Posterior vena cava (tissue), 2 donors: ENCODE measurements at regions of chr7 and their contacts with region 1.

Region 1: DNA sequence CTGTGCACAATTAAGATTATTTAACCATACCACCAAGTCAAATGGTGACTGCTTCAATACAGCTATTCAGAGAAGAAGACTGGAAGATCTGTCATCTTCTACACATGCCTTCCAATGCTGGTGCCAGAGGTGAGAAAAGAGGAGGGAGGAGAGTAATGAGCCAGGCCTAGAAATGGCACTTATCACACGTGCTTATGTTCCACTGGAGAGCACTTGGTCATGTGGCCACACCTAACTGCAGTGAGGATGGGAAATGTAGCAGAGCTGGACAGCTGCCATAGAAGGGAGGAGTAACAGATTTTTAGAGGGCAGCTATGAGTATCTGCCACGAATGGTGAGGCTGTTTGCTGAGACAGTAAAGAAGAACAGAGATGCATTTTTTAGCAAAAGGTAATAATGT is 77.1 kb downstream of the MPLKIP start:
- DNase-seq: no peak

Region 2: GRCh38 chr7:39894904-39895303 is 162.4 kb before region 1 on chr7:
- intact Hi-C with region 1: loop called (anchors 2 to 10 kb)
- DNase-seq: no peak

Region 3: GRCh38 chr7:39948956-39949928 is 108.0 kb before region 1 on chr7:
- intact Hi-C with region 1: loop called in 1 of 2 experiments (anchors 10 kb)
- DNase-seq: peak; percentile 100